Thyroid gland (tissue), 4 donors: ENCODE measurements at regions of chr2 and their contacts with region 1.

Region 1: GRCh38 chr2:176565641-176566323 is 296.5 kb downstream of the MTX2 start:
- DNase-seq: peak in 1 of 2 donors; percentile 5
- H3K4me3 ChIP-seq: no peak overlapping the region
- H3K27ac ChIP-seq: no peak overlapping the region
- H3K4me1 ChIP-seq: no peaks in the 10 kb centered on the region
- H3K27me3 ChIP-seq: no peaks in the 10 kb centered on the region
- CTCF ChIP-seq: no peak
- POLR2A ChIP-seq: no peak

Region 2: GRCh38 chr2:176157499-176158185 is 408.1 kb before region 1 on chr2:
- intact Hi-C with region 1: no loop called
- DNase-seq: no peak
- H3K4me3 ChIP-seq: no peak overlapping the region
- H3K27ac ChIP-seq: no peak overlapping the region
- H3K4me1 ChIP-seq: peaks cover 7 to 27% of the 10 kb centered on the region in 2 donors
- H3K27me3 ChIP-seq: peaks cover 66% of the 10 kb centered on the region
- CTCF ChIP-seq: no peak
- POLR2A ChIP-seq: no peak

Region 3: DNA sequence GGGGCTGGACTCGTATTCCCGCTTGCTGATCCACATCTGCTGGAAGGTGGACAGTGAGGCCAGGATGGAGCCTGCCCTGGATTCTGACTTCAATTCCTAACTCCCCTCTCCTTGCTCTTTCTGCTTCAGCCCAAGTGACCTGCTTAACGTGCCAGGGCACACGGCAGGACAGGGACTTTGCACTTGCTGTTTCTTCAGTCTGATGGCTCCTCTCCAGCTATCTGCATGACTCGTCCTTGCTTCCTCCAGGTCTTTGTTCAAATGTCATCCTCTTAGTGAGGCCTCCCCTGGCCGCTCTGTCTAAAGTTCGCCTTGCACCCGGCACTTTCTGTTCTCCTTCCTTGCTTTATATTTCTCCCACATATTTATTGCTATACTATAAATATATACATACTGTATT is 61.0 kb after region 1 on chr2:
- intact Hi-C with region 1: loop called (anchors 5 kb)
- DNase-seq: no peak
- H3K4me3 ChIP-seq: no peak overlapping the region
- H3K27ac ChIP-seq: no peak overlapping the region
- H3K4me1 ChIP-seq: no peaks in the 10 kb centered on the region
- H3K27me3 ChIP-seq: no peaks in the 10 kb centered on the region
- CTCF ChIP-seq: no peak
- POLR2A ChIP-seq: no peak